Panc1 (cell line): ENCODE measurements at regions of chr1 and their contacts with region 1.

Region 1: DNA sequence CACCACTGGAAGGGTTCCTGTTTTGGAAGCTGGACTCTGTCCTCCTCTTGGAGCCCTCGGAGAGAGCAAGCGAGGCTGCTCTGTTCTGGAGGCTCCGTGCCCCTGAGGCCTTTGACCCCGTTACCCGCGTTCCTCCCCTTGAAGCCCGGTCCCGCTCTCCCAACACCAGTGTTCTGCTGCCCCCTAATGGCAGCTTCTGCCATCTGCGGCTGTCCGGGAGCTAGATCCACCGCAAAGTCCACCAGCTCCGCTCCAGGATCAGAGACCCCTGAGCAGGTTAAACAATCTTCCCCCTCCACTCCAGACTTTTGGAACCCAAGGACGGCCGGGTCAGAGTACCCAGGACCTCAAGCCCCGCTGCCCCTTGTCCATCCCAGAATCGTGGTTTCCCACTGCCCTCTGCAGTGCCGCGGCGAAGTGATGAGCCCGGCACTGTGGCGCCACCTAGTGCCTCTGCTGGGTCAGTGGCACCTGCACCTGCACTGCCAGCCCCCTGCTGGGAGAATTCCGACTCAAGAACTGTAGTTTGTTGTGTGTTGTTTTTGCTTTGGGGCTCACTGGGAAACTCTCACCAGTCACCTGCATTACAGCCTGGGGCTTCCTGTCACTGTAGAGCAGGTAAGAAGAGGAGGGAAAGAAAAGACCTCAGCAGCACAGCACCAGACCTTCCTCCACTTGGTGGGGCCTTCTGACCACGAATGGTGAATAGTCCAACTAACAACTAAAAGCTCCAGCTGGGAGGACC is 63.5 kb upstream of the NFASC start:
- DNase-seq: peak; percentile 74
- ATAC-seq: peak; percentile 98
- H3K4me3 ChIP-seq: peak overlapping the region; percentile 44 to 56
- H3K27ac ChIP-seq: peak overlapping the region; percentile 37; the same call in 1 of the 2 replicates
- H3K4me1 ChIP-seq: 0 out of 2 replicates have a peak, but pooled peaks cover 3% of the 10 kb centered on the region
- H3K27me3 ChIP-seq: peaks cover 7% of the 10 kb centered on the region
- CTCF ChIP-seq: peak; percentile 99

Region 2: GRCh38 chr1:204506961-204507387 is 300.1 kb before region 1 on chr1:
- CTCF ChIA-PET with region 1: interaction called, 13 read pairs
- POLR2A ChIA-PET with region 1: no interaction called
- in situ Hi-C with region 1: no loop called
- intact Hi-C with region 1: no loop called
- DNase-seq: peak; percentile 97
- ATAC-seq: peak; percentile 90
- H3K4me3 ChIP-seq: peak overlapping the region; percentile 57 to 69
- H3K27ac ChIP-seq: peak overlapping the region; percentile 84
- H3K4me1 ChIP-seq: peaks cover 3% of the 10 kb centered on the region; the same call in 1 of the 2 replicates
- H3K27me3 ChIP-seq: no peaks in the 10 kb centered on the region
- CTCF ChIP-seq: no peak

Region 3: DNA sequence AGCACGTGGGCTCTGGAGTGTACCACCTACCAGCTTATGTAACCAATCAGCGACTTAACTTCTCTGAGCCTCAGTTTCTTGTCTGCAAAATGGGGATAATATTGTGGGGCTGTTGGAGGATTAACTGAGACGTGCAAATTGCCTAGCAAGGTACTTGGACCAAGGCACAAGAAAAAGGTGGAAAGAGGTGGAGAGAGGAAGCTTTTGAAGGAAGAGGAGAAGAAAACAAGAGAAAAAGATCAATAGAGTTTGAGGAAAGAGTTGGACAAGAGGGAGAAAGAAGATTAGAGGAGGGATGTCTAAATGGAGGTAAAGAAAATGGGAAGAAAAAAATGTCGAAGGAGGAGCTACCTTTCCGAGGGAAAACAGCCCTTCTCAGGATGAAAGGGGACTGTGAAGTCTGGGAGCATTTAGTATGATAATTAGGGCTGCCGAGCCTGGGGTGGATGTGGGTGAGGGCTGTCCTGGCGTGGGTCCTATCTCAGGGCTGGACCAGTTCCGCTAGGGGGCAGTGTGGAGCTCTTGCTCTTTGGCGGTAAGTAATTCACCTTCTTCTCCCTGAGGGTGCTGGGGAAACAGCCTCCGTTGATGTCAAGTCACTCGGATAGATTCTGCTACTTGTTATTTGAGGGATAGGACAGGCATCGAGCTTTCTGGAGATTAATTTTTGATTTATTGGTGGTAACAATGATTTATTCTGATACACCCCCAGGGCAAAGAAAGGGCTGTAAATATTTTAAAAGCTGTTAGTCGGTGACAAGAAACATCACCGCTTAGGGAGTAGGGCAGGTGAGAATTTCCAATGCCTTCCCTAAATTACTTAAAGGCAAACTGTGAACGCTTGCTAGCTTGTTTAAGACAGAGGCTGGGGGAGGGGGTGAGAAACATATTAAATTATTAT is 15.4 kb before region 1 on chr1:
- CTCF ChIA-PET with region 1: interaction called, 15 read pairs
- POLR2A ChIA-PET with region 1: no interaction called
- in situ Hi-C with region 1: no loop called
- intact Hi-C with region 1: no loop called
- DNase-seq: peak; percentile 36
- ATAC-seq: peak; percentile 92
- H3K4me3 ChIP-seq: no peak overlapping the region
- H3K27ac ChIP-seq: no peak overlapping the region
- H3K4me1 ChIP-seq: 0 out of 2 replicates have a peak, but pooled peaks cover 4% of the 10 kb centered on the region
- H3K27me3 ChIP-seq: peaks cover 13% of the 10 kb centered on the region
- CTCF ChIP-seq: peak; percentile 95

Region 4: DNA sequence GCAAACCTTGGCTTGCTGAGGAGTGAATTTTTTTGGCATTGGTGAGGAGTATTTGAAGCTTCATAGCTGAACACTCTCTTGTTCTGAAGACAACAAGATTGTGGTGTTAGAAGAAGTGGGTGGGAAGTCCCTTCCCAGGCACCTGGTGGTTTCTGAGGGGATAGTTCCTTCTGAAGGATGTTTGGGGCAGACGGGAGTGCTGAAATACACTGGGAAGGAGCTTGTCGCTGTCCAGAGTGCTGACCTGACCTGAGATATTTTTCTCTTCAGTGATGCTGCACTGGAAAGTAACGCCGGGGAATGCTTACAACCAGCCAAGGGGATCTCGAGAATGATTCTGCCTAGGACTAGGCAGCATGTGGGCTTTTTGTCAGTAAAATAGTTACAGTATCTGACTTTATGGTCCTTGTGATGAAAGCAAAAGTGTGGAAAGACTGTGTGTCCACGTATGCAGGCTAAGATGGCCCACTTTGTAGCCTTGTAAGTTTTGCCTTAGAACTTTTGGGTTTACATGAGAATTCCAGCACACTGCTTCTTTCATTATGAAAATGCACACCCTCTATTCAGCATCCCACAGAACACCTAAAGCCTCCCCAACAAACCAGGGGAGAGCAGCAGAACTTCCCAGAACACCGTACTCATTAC is 30.4 kb after region 1 on chr1:
- CTCF ChIA-PET with region 1: no interaction called
- POLR2A ChIA-PET with region 1: no interaction called
- in situ Hi-C with region 1: no loop called
- intact Hi-C with region 1: no loop called
- DNase-seq: no peak
- ATAC-seq: no peak; the same call in 1 of the 2 replicates
- H3K4me3 ChIP-seq: no peak overlapping the region
- H3K27ac ChIP-seq: no peak overlapping the region
- H3K4me1 ChIP-seq: no peaks in the 10 kb centered on the region
- H3K27me3 ChIP-seq: no peaks in the 10 kb centered on the region
- CTCF ChIP-seq: no peak

Region 5: GRCh38 chr1:204941421-204942338 is 134.6 kb after region 1 on chr1:
- CTCF ChIA-PET with region 1: interaction called, 8 read pairs
- POLR2A ChIA-PET with region 1: no interaction called
- in situ Hi-C with region 1: no loop called
- intact Hi-C with region 1: loop called (anchors 1 kb)
- DNase-seq: peak; percentile 53
- ATAC-seq: peak; percentile 70; the same call in 1 of the 2 replicates
- H3K4me3 ChIP-seq: no peak overlapping the region
- H3K27ac ChIP-seq: no peak overlapping the region
- H3K4me1 ChIP-seq: no peaks in the 10 kb centered on the region; the same call in 1 of the 2 replicates
- H3K27me3 ChIP-seq: peaks cover 2% of the 10 kb centered on the region; the same call in 1 of the 2 replicates
- CTCF ChIP-seq: peak; percentile 96

Region 6: GRCh38 chr1:205137901-205138300 is 330.8 kb after region 1 on chr1:
- CTCF ChIA-PET with region 1: no interaction called
- POLR2A ChIA-PET with region 1: no interaction called
- in situ Hi-C with region 1: no loop called
- intact Hi-C with region 1: no loop called
- DNase-seq: no peak
- ATAC-seq: no peak
- H3K4me3 ChIP-seq: no peak overlapping the region
- H3K27ac ChIP-seq: no peak overlapping the region
- H3K4me1 ChIP-seq: no peaks in the 10 kb centered on the region
- H3K27me3 ChIP-seq: no peaks in the 10 kb centered on the region
- CTCF ChIP-seq: no peak